Esophagus muscularis mucosa (tissue), 4 donors: ENCODE measurements at regions of chr2 and their contacts with region 1.

Region 1: DNA sequence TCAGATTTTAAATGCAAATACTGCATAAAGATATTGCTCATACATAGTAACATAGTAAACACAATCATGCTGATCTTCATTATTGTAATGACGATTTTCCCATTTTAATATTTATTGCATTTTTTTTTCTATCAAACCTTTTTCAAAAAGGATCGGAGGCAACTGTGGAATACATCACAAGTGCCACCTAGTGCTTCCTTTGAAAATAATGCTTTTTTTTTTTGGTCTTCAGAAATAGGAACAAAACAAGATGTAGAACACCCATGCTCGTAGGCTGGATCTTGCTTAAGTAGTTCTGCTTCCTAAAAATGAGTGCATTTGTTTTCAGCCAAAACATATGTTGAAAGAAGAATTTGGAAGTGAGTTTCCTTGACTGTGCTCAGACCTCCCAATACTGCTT is 35.7 kb upstream of the GPR155 start:
- DNase-seq: no peak
- H3K4me3 ChIP-seq: no peak overlapping the region
- H3K27ac ChIP-seq: no peak overlapping the region
- H3K4me1 ChIP-seq: peaks cover 0 to 7% (median 0%) of the 10 kb centered on the region in 4 donors
- H3K27me3 ChIP-seq: no peaks in the 10 kb centered on the region
- CTCF ChIP-seq: peak; percentile 31 to 43 (median 38)
- EP300 ChIP-seq: no peak
- POLR2A ChIP-seq: no peak

Region 2: GRCh38 chr2:174465327-174465726 is 57.2 kb before region 1 on chr2:
- intact Hi-C with region 1: loop called (anchors 2 kb)
- DNase-seq: no peak
- H3K4me3 ChIP-seq: no peak overlapping the region
- H3K27ac ChIP-seq: no peak overlapping the region
- H3K4me1 ChIP-seq: peaks cover 0 to 3% (median 0%) of the 10 kb centered on the region in 4 donors
- H3K27me3 ChIP-seq: no peaks in the 10 kb centered on the region
- CTCF ChIP-seq: no peak
- EP300 ChIP-seq: no peak
- POLR2A ChIP-seq: no peak

Region 3: GRCh38 chr2:174615871-174616436 is 93.4 kb after region 1 on chr2:
- intact Hi-C with region 1: no loop called
- DNase-seq: no peak
- H3K4me3 ChIP-seq: no peak overlapping the region
- H3K27ac ChIP-seq: peak overlapping the region; percentile 1 to 52 (median 32)
- H3K4me1 ChIP-seq: peaks cover 22 to 41% (median 33%) of the 10 kb centered on the region in 4 donors
- H3K27me3 ChIP-seq: no peaks in the 10 kb centered on the region
- CTCF ChIP-seq: no peak
- EP300 ChIP-seq: no peak
- POLR2A ChIP-seq: no peak